GM12878 (cell line): ENCODE measurements at regions of chr20 and their contacts with region 1.

Region 1: GRCh38 chr20:36562724-36563123 is 10.7 kb upstream of the TGIF2 start:
- DNase-seq: no peak
- ATAC-seq: no peak
- H3K4me3 ChIP-seq: no peak overlapping the region
- H3K27ac ChIP-seq: no peak overlapping the region
- H3K4me1 ChIP-seq: no peaks in the 10 kb centered on the region
- H3K27me3 ChIP-seq: no peaks in the 10 kb centered on the region
- CTCF ChIP-seq: no peak
- EP300 ChIP-seq: no peak
- POLR2A ChIP-seq: no peak
- RAD21 ChIP-seq: no peak

Region 2: GRCh38 chr20:36591854-36592641 is 29.3 kb after region 1 on chr20:
- CTCF ChIA-PET with region 1: interaction called, 14 read pairs
- POLR2A ChIA-PET with region 1: no interaction called
- RAD21 ChIA-PET with region 1: interaction called, 13 read pairs
- SMC1A ChIA-PET with region 1: interaction called, 7 read pairs
- in situ Hi-C with region 1: no loop called
- intact Hi-C with region 1: no loop called
- DNase-seq: no peak
- ATAC-seq: no peak
- H3K4me3 ChIP-seq: no peak overlapping the region
- H3K27ac ChIP-seq: no peak overlapping the region
- H3K4me1 ChIP-seq: peaks cover 41% of the 10 kb centered on the region
- H3K27me3 ChIP-seq: no peaks in the 10 kb centered on the region
- CTCF ChIP-seq: peak in 2 of 3 experiments; percentile 23 to 43; a peak in 3 of 6 replicates
- EP300 ChIP-seq: no peak
- POLR2A ChIP-seq: no peak
- RAD21 ChIP-seq: no peak

Region 3: GRCh38 chr20:36599912-36600345 is 37.2 kb after region 1 on chr20:
- CTCF ChIA-PET with region 1: interaction called, 33 read pairs
- POLR2A ChIA-PET with region 1: interaction called, 7 read pairs
- RAD21 ChIA-PET with region 1: interaction called, 18 read pairs
- SMC1A ChIA-PET with region 1: interaction called, 18 read pairs
- in situ Hi-C with region 1: no loop called
- intact Hi-C with region 1: loop called (anchors 5 kb)
- DNase-seq: peak; percentile 40
- ATAC-seq: peak; percentile 20
- H3K4me3 ChIP-seq: no peak overlapping the region
- H3K27ac ChIP-seq: peak overlapping the region; percentile 80
- H3K4me1 ChIP-seq: peaks cover 43% of the 10 kb centered on the region
- H3K27me3 ChIP-seq: no peaks in the 10 kb centered on the region
- CTCF ChIP-seq: no peak
- EP300 ChIP-seq: no peak
- POLR2A ChIP-seq: no peak
- RAD21 ChIP-seq: no peak

Region 4: GRCh38 chr20:36629719-36630681 is 67.3 kb after region 1 on chr20:
- CTCF ChIA-PET with region 1: no interaction called
- POLR2A ChIA-PET with region 1: no interaction called
- RAD21 ChIA-PET with region 1: no interaction called
- SMC1A ChIA-PET with region 1: no interaction called
- in situ Hi-C with region 1: no loop called
- intact Hi-C with region 1: no loop called
- DNase-seq: no peak
- ATAC-seq: peak; percentile 97
- H3K4me3 ChIP-seq: no peak overlapping the region
- H3K27ac ChIP-seq: peak overlapping the region; percentile 37; the same call in 1 of the 2 replicates
- H3K4me1 ChIP-seq: peaks cover 12% of the 10 kb centered on the region
- H3K27me3 ChIP-seq: no peaks in the 10 kb centered on the region
- CTCF ChIP-seq: no peak
- EP300 ChIP-seq: no peak
- POLR2A ChIP-seq: no peak
- RAD21 ChIP-seq: no peak

Region 5: DNA sequence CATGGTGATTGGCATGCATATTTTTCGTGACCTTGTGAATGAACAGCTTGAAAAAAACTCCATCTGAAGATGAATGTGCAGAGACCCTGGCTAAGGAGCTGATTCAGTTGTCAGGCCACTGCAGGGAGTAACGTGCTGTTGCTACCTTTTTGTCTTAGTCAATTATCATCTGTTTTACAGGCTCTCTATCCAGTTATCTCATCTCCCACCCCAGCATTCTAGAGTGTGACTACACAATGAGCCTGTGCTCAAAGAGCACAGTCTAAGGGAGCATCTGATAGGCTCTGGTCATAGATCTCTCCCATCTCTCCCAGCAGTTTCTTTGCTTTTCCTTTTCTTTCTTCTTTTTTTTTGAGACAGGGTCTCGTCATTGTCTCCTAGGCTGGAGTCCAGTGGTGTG is 137.7 kb after region 1 on chr20:
- CTCF ChIA-PET with region 1: no interaction called
- POLR2A ChIA-PET with region 1: no interaction called
- RAD21 ChIA-PET with region 1: no interaction called
- SMC1A ChIA-PET with region 1: no interaction called
- in situ Hi-C with region 1: no loop called
- intact Hi-C with region 1: no loop called
- DNase-seq: no peak
- ATAC-seq: no peak
- H3K4me3 ChIP-seq: no peak overlapping the region
- H3K27ac ChIP-seq: no peak overlapping the region
- H3K4me1 ChIP-seq: no peaks in the 10 kb centered on the region
- H3K27me3 ChIP-seq: no peaks in the 10 kb centered on the region
- CTCF ChIP-seq: no peak
- EP300 ChIP-seq: no peak
- POLR2A ChIP-seq: no peak
- RAD21 ChIP-seq: no peak